Activated T-helper 1 cell treated with anti-CD3 and anti-CD28 coated beads, Interleukin-12 subunit alpha, Interleukin-12 subunit beta, Interleukin-2, Interleukin-4 antibody, amounts not matched to agents 30 ng/mL and 10 ng/mL and 1 ng/mL, durations not matched to agents 14 hours and 24 hours and 36 hours (primary cell): ENCODE measurements at regions of chr2 and their contacts with region 1.

Region 1: GRCh38 chr2:108583903-108584520 is 49.7 kb downstream of the LIMS1 start:
- DNase-seq: peak; percentile 28
- H3K4me3 Mint-ChIP-seq: no peak overlapping the region
- H3K27ac Mint-ChIP-seq: no peak overlapping the region
- H3K4me1 Mint-ChIP-seq: peaks cover 43% of the 10 kb centered on the region
- H3K27me3 Mint-ChIP-seq: no peaks in the 10 kb centered on the region

Region 2: GRCh38 chr2:108169982-108170625 is 413.9 kb before region 1 on chr2:
- intact Hi-C with region 1: loop called (anchors 10 kb)
- DNase-seq: no peak
- H3K4me3 Mint-ChIP-seq: no peak overlapping the region
- H3K27ac Mint-ChIP-seq: no peak overlapping the region
- H3K4me1 Mint-ChIP-seq: no peaks in the 10 kb centered on the region
- H3K27me3 Mint-ChIP-seq: peaks cover 3% of the 10 kb centered on the region

Region 3: DNA sequence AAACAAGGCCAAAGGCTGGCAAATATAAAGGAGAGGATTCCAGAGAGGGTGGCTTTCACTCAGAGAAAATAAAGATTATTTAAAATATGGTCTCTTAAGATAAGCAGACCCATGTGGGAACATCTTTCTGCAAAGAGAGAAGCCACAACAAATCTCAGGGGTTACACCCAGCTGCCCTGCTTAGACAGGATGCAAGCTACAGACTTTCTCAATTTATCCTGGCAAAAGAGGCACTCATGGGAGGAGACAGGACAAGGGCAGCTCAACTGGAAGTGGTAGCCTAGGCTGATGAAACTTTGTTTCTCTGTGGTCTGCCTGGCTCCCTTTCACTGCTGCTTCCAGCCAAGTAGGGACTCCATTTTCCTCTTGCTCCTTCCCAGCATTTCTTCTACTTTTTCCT is 232.1 kb before region 1 on chr2:
- intact Hi-C with region 1: loop called (anchors 1 kb)
- DNase-seq: no peak
- H3K4me3 Mint-ChIP-seq: no peak overlapping the region
- H3K27ac Mint-ChIP-seq: no peak overlapping the region
- H3K4me1 Mint-ChIP-seq: no peaks in the 10 kb centered on the region
- H3K27me3 Mint-ChIP-seq: no peaks in the 10 kb centered on the region

Region 4: GRCh38 chr2:108417255-108417654 is 166.8 kb before region 1 on chr2:
- intact Hi-C with region 1: loop called (anchors 1 kb)
- DNase-seq: no peak
- H3K4me3 Mint-ChIP-seq: no peak overlapping the region
- H3K27ac Mint-ChIP-seq: no peak overlapping the region
- H3K4me1 Mint-ChIP-seq: no peaks in the 10 kb centered on the region
- H3K27me3 Mint-ChIP-seq: peaks cover 4% of the 10 kb centered on the region

Region 5: GRCh38 chr2:108492364-108492763 is 91.6 kb before region 1 on chr2:
- intact Hi-C with region 1: loop called (anchors 5 kb)
- DNase-seq: no peak
- H3K4me3 Mint-ChIP-seq: no peak overlapping the region
- H3K27ac Mint-ChIP-seq: no peak overlapping the region
- H3K4me1 Mint-ChIP-seq: peaks cover 6% of the 10 kb centered on the region
- H3K27me3 Mint-ChIP-seq: no peaks in the 10 kb centered on the region

Region 6: DNA sequence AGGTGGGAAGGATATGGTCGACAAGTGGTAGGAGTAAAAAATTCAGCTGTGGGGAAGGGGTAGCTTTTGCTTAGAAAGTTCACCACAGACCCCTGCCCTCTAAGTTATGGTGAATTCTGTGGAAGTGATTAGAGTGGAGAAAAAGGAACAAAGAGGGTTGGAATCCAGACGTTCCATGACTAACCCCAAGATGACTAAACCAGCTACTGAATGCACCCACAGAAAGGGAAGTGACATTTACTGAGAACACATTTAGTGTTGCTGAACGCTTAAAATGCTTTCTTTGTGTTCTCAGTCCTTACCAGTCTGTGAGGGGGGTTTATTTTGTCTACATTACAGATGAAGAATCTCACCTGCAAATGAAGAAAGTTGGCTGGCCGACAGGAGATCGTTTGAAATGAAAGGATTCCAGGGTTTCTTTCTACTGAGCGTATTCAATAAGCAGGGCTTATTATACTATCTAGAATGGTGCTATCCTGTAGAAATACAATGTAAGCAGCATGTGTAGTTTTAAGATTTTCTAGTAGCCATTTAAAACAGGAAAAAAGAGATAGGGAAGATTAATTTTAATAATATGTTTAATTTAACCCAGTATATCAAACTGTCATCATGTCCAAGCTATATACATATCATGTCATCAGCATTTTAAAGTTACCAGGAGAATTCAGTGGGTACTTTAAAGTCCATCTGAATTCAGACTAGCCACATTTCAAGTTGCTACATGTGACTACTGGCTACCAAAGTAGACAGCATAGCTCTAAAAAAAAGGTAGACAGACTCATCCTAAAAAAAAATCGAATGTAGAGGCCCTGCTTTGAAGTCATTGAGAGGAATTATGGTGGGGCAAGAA is 10.3 kb after region 1 on chr2:
- intact Hi-C with region 1: loop called (anchors 1 kb)
- DNase-seq: no peak
- H3K4me3 Mint-ChIP-seq: peak overlapping the region; percentile 72
- H3K27ac Mint-ChIP-seq: peak overlapping the region; percentile 92
- H3K4me1 Mint-ChIP-seq: peaks cover 63% of the 10 kb centered on the region
- H3K27me3 Mint-ChIP-seq: no peaks in the 10 kb centered on the region